Activated CD4-positive, alpha-beta memory T cell treated with anti-CD3 and anti-CD28 coated beads for 36 hours (primary cell): ENCODE measurements at regions of chr5 and their contacts with region 1.

Region 1: GRCh38 chr5:139787568-139788293 is 7.9 kb upstream of the PSD2 start:
- DNase-seq: peak; percentile 90
- H3K4me3 Mint-ChIP-seq: peak overlapping the region; percentile 78
- H3K27ac Mint-ChIP-seq: no peak overlapping the region
- H3K4me1 Mint-ChIP-seq: peaks cover 4% of the 10 kb centered on the region
- H3K27me3 Mint-ChIP-seq: peaks cover 14% of the 10 kb centered on the region

Region 2: DNA sequence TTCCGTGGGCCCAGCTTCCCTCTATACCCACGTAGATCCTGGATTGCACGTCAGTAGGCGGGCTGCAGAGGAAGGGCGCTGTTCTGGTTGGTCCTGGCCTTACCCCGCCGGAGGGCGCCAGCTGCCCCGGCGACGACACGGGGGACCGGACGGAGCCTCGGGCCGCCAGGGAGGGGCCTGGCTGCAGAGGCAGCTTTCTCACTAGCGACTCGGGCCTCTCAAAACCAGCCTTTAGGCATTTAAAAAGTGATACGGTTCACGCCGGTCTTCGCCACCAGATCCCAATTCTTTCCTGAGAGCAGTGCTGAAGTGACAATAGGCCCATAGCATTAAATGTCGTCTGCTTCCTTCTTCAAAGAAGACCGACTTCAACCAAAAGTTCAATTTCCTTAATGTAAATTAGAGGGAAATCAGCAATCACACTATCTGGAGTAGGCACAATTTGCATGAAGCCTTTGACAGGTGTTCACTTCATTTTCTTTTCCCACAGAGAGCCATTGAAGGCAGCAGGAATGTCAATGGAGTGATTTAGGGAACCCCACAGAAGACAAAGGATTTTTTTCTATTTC is 244.2 kb before region 1 on chr5:
- CTCF ChIA-PET with region 1: no interaction called
- POLR2A ChIA-PET with region 1: no interaction called
- intact Hi-C with region 1: no loop called
- DNase-seq: peak; percentile 69
- H3K4me3 Mint-ChIP-seq: no peak overlapping the region
- H3K27ac Mint-ChIP-seq: no peak overlapping the region
- H3K4me1 Mint-ChIP-seq: peaks cover 4% of the 10 kb centered on the region
- H3K27me3 Mint-ChIP-seq: no peaks in the 10 kb centered on the region

Region 3: DNA sequence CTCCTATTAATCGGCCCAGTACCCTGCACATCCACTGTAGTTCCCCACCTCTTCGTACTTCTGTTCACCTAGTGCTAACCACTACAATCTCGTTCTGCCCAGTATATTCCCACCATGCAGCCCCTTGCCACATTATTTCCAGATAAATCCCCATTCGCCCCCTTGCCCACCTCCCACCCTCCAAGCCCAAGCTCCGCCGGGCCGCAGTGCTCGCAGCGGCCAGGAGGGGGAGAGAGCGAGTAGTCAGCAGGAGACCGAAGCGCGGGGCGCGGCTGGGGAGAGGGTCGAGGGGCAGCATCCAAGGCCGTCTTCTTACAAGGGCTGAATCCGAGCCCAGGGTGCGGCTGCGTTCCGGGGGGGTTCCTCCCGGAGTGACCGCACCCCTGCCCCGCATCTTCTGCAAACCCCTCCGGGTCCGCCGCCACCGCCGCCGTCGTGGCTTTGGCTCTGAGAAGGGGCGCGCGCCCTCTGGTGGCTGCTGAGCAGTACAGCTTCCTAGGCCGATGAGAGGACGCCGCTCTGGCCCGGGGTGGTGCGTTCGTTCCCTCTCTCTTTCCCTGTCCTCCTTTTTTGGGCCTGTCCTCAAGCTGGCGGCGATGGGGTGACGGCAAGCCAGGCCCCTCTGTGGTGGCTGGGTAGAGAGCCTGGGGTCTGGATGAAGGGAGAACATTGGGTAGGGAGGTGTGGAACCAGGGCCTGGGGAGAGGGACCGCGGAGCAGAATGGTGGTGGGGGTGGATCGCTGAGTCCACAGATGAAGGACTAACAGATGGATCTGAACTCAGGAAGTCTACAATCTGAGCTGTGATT is 22.1 kb before region 1 on chr5:
- CTCF ChIA-PET with region 1: interaction called, 31 read pairs
- POLR2A ChIA-PET with region 1: no interaction called
- intact Hi-C with region 1: no loop called
- DNase-seq: peak; percentile 86
- H3K4me3 Mint-ChIP-seq: peak overlapping the region; percentile 50
- H3K27ac Mint-ChIP-seq: no peak overlapping the region
- H3K4me1 Mint-ChIP-seq: peaks cover 15% of the 10 kb centered on the region
- H3K27me3 Mint-ChIP-seq: peaks cover 31% of the 10 kb centered on the region

Region 4: GRCh38 chr5:139806726-139807646 is 19.3 kb after region 1 on chr5:
- CTCF ChIA-PET with region 1: interaction called, 18 read pairs
- POLR2A ChIA-PET with region 1: no interaction called
- intact Hi-C with region 1: no loop called
- DNase-seq: no peak
- H3K4me3 Mint-ChIP-seq: no peak overlapping the region
- H3K27ac Mint-ChIP-seq: no peak overlapping the region
- H3K4me1 Mint-ChIP-seq: no peaks in the 10 kb centered on the region
- H3K27me3 Mint-ChIP-seq: peaks cover 9% of the 10 kb centered on the region

Region 5: DNA sequence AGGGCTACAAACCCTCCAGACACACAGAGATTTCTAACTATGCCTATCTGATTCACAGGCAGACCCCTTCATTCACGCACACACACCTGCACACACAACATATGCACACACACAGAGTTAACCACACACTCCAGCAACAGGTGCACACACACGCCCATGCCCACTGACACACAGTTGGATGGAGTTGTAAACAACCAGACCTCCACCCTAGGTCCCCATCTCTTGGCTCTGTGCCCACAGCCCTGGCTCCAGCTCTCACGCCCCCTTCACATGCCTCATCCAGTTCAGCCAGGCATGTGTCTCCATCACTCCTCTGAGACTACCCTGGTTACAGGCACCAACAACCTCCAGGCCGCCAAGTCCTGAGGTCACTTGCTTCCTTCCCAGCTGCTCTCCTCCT is 69.0 kb after region 1 on chr5:
- CTCF ChIA-PET with region 1: interaction called, 137 read pairs
- POLR2A ChIA-PET with region 1: no interaction called
- intact Hi-C with region 1: no loop called
- DNase-seq: no peak
- H3K4me3 Mint-ChIP-seq: no peak overlapping the region
- H3K27ac Mint-ChIP-seq: no peak overlapping the region
- H3K4me1 Mint-ChIP-seq: no peaks in the 10 kb centered on the region
- H3K27me3 Mint-ChIP-seq: no peaks in the 10 kb centered on the region

Region 6: DNA sequence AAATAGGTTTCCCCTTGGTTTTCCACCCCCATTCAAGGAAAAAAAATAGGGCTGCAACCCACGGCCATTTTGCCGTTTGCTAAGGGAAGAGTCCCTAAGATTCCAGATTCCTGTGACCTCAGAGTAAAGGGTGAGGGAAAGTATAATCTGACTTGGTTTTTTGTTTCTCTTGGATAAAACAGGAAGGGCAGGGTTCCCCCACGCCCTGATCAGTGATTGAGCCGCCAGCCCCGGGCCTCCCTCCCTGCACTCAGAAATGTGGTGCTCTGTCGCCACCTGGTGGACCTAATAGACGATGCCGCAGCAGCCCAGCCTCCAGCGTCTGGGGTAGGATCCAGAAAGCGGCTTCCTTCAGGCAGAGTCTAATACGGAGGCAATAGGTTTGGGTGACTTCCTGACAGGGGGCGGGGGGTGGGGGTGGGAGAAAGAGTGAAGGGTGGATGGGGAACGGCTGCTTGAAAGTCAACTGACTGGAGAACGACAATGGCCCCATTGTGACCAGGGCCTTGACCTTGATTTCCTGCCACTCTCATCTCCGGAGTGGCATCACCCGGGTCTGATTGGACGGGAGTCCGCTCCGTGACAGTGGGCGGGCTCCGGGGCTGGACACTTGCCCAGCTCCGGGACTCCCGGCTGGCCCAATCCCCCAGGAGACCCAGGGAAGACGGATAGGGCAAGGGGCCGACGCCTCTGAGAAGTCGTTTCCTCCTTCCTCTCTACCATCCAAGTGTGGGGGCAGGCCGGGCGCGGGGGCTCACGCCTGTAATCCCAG is 369.5 kb after region 1 on chr5:
- CTCF ChIA-PET with region 1: no interaction called
- POLR2A ChIA-PET with region 1: no interaction called
- intact Hi-C with region 1: loop called (anchors 2 kb)
- DNase-seq: peak; percentile 92
- H3K4me3 Mint-ChIP-seq: peak overlapping the region; percentile 2
- H3K27ac Mint-ChIP-seq: no peak overlapping the region
- H3K4me1 Mint-ChIP-seq: peaks cover 10% of the 10 kb centered on the region
- H3K27me3 Mint-ChIP-seq: no peaks in the 10 kb centered on the region

Region 7: GRCh38 chr5:140202078-140202477 is 414.3 kb after region 1 on chr5:
- CTCF ChIA-PET with region 1: no interaction called
- POLR2A ChIA-PET with region 1: no interaction called
- intact Hi-C with region 1: no loop called
- DNase-seq: no peak
- H3K4me3 Mint-ChIP-seq: no peak overlapping the region
- H3K27ac Mint-ChIP-seq: no peak overlapping the region
- H3K4me1 Mint-ChIP-seq: no peaks in the 10 kb centered on the region
- H3K27me3 Mint-ChIP-seq: peaks cover 2% of the 10 kb centered on the region